Right ventricle myocardium superior (tissue), 1 donor: ENCODE measurements at regions of chr19 and their contacts with region 1.

Region 1: GRCh38 chr19:29610563-29611271 is 4.6 kb downstream of the POP4 start:
- DNase-seq: peak; percentile 88
- ATAC-seq: peak; percentile 82

Region 2: DNA sequence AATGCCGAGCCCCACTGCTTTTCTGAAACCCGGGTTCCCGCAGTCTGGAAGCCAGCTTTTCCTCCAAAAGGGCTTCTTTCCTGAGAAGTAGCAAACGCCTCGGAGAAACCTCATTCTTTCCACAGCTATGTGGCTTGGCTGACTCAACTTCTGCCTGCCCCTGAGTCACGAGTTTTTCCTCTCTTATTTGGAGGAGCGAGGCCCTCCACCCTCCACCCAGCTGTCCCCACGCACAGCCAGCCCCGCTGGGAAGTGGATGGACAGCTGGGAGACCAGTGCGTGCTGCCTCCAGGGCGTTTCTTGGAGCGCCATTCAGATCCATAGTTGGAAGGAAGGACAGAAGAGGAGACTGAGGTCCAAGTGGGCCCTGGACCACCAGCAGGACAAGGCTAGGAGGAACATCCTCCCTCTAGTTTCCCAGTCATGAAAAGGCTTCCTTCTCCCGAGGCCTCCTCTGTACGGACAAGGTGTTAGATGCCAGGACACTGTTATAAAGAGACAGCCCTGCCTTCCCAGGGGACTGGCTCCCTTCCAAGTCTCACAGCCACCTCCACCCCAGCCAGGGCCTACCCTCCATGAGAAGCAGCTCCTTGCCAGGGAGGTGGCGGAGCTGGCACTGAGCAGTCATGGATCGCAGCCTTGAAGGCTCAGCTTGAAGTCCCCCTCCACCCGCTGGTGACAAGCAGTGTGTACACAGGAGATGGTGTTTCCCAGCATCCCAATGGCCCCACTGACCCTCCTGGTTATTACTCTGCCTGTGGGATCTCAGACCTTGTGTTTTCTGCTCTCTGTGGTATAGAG is 52.1 kb after region 1 on chr19:
- intact Hi-C with region 1: loop called (anchors 5 kb)
- DNase-seq: peak; percentile 76
- ATAC-seq: peak; percentile 30

Region 3: GRCh38 chr19:29694669-29695627 is 84.2 kb after region 1 on chr19:
- intact Hi-C with region 1: loop called (anchors 5 kb)
- DNase-seq: peak; percentile 89
- ATAC-seq: peak; percentile 97

Region 4: DNA sequence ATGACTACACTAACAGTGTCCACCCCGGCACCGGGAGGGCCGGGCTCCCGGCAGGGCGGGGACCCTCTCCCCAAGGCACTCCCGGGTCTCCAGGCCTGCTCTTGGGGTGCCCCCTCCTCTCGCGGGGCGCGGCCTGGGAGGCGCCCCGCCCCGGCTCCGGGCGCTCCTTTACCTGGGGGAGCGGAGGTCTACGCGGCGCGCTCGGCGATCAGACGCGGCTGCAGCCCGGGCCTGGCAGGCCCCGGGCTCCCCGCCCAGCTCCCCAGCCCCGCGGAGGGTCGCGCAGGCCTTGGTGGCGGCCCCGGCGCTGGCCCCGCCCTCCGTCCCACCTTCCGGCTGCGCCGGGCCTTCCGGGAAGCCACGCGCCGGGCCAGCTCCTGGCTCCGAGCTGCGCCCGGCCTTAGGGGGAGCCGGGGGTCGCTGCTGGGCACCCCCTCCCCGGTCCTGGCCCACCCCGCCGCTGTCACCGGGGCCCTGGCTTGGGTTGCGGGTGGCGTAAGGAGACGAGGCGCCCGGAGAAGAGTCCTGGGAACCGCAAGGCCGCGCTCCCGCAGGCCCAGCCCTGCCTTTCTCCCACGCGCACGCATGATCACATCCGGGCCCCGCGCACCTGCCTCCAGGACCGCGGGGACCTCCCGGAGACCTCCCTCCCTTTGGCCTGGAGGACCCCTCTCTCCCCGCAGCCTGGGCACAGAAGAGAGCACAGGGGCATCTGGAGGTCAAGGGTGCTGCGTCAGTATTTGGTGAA is 104.4 kb after region 1 on chr19 and contains the start of gene C19orf12:
- intact Hi-C with region 1: loop called (anchors 2 kb)
- DNase-seq: peak; percentile 76
- ATAC-seq: peak; percentile 88
- total RNA-seq, gene C19orf12: 59.9 TPM